CD8-positive, alpha-beta T cell (primary cell): ENCODE measurements at regions of chr2 and their contacts with region 1.

Region 1: DNA sequence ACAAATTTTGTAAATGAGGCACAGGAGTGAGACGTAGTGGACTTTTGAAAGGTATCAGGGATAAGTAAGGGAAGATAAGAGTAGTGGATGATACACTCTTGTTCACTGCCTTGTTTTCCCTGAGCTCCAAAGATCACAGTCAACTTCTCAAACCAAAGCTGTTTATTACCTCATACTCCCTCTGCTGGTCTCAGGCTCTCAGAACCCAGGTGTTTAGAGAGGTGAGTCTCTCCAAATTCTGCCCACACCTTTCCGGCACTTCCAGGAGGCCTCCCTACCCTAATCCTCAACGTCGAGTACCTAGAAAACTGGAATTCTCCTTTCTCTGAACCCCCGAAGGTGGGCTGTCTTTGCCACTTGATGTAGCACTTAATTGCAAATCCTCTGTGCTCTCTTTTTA is 621.1 kb downstream of the BCL11A start:
- DNase-seq: no peak
- ATAC-seq: no peak
- H3K4me3 ChIP-seq: no peak overlapping the region
- H3K4me3 Mint-ChIP-seq: no peak overlapping the region
- H3K27ac ChIP-seq: no peak overlapping the region
- H3K27ac Mint-ChIP-seq: no peak overlapping the region
- H3K4me1 ChIP-seq: no peaks in the 10 kb centered on the region
- H3K4me1 Mint-ChIP-seq: peaks cover 7% of the 10 kb centered on the region
- H3K27me3 ChIP-seq: no peaks in the 10 kb centered on the region
- H3K27me3 Mint-ChIP-seq: no peaks in the 10 kb centered on the region
- CTCF ChIP-seq: no peak

Region 2: GRCh38 chr2:59025157-59025757 is 907.1 kb before region 1 on chr2:
- CTCF ChIA-PET with region 1: no interaction called
- POLR2A ChIA-PET with region 1: no interaction called
- intact Hi-C with region 1: loop called in 1 of 2 experiments (anchors 5 kb)
- DNase-seq: peak in 5 of 9 experiments; percentile 9 to 50 (median 13)
- ATAC-seq: no peak
- H3K4me3 ChIP-seq: no peak overlapping the region
- H3K4me3 Mint-ChIP-seq: no peak overlapping the region
- H3K27ac ChIP-seq: no peak overlapping the region
- H3K27ac Mint-ChIP-seq: no peak overlapping the region
- H3K4me1 ChIP-seq: no peaks in the 10 kb centered on the region
- H3K4me1 Mint-ChIP-seq: no peaks in the 10 kb centered on the region
- H3K27me3 ChIP-seq: no peaks in the 10 kb centered on the region
- H3K27me3 Mint-ChIP-seq: no peaks in the 10 kb centered on the region
- CTCF ChIP-seq: no peak

Region 3: GRCh38 chr2:59986511-59986910 is 54.2 kb after region 1 on chr2:
- CTCF ChIA-PET with region 1: no interaction called
- POLR2A ChIA-PET with region 1: no interaction called
- intact Hi-C with region 1: no loop called
- DNase-seq: no peak
- ATAC-seq: no peak
- H3K4me3 ChIP-seq: no peak overlapping the region
- H3K4me3 Mint-ChIP-seq: no peak overlapping the region
- H3K27ac ChIP-seq: no peak overlapping the region
- H3K27ac Mint-ChIP-seq: no peak overlapping the region
- H3K4me1 ChIP-seq: no peaks in the 10 kb centered on the region
- H3K4me1 Mint-ChIP-seq: no peaks in the 10 kb centered on the region
- H3K27me3 ChIP-seq: no peaks in the 10 kb centered on the region
- H3K27me3 Mint-ChIP-seq: no peaks in the 10 kb centered on the region
- CTCF ChIP-seq: no peak